Activated naive CD4-positive, alpha-beta T cell treated with anti-CD3 and anti-CD28 coated beads for 36 hours (primary cell): ENCODE measurements at regions of chr10 and their contacts with region 1.

Region 1: GRCh38 chr10:97025613-97026242 is 160.0 kb downstream of the SLIT1 start:
- DNase-seq: peak; percentile 80
- H3K4me3 Mint-ChIP-seq: no peak overlapping the region
- H3K27ac Mint-ChIP-seq: no peak overlapping the region
- H3K4me1 Mint-ChIP-seq: peaks cover 2% of the 10 kb centered on the region
- H3K27me3 Mint-ChIP-seq: no peaks in the 10 kb centered on the region

Region 2: DNA sequence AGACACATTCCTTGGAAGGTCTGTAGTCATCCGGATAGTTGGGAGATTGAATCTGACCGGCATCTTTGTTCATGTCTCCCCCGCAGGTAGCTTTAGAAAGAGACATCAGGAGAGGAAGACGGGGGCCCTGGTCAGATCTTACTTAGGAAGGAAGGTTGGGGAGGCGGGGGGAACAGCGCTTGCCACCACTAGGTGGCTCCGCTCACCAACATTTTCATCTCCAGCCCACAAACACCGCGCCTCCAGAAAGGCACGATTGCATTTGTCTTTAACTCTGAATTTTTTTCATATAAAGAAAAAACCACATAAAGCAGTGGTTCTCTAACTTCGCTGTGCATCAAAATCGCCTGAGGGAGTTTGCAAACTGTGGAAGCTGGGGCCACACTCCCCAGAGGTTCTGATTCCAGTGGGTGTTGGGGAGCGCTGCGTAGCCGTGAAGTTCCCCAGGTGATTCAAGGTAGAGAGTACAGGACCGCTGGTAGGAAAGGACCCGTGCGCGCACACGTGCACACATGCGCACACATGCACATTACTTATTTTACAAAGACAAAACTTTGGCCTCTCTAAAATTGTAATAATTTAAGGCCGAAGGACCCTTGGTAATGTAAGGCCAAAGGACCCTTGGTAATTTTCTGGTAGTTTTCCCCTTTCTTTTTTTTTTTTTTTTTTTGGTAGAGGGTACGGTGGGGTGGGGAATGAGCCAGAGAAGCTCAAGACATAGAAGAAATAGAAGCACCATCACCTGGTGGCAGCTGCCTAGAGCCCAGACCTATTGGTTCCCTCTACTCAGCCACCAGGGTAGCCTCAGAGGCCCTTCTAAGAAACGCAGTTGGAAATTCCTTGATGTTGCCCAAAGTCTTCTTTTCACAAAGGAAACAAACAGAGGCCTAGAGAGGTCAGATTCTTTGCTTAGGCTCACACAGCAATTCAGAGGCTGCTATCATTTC is 629.5 kb before region 1 on chr10:
- CTCF ChIA-PET with region 1: interaction called, 3 read pairs
- intact Hi-C with region 1: loop called (anchors 5 kb)
- DNase-seq: peak; percentile 75
- H3K4me3 Mint-ChIP-seq: peak overlapping the region; percentile 28
- H3K27ac Mint-ChIP-seq: no peak overlapping the region
- H3K4me1 Mint-ChIP-seq: no peaks in the 10 kb centered on the region
- H3K27me3 Mint-ChIP-seq: peaks cover 15% of the 10 kb centered on the region

Region 3: DNA sequence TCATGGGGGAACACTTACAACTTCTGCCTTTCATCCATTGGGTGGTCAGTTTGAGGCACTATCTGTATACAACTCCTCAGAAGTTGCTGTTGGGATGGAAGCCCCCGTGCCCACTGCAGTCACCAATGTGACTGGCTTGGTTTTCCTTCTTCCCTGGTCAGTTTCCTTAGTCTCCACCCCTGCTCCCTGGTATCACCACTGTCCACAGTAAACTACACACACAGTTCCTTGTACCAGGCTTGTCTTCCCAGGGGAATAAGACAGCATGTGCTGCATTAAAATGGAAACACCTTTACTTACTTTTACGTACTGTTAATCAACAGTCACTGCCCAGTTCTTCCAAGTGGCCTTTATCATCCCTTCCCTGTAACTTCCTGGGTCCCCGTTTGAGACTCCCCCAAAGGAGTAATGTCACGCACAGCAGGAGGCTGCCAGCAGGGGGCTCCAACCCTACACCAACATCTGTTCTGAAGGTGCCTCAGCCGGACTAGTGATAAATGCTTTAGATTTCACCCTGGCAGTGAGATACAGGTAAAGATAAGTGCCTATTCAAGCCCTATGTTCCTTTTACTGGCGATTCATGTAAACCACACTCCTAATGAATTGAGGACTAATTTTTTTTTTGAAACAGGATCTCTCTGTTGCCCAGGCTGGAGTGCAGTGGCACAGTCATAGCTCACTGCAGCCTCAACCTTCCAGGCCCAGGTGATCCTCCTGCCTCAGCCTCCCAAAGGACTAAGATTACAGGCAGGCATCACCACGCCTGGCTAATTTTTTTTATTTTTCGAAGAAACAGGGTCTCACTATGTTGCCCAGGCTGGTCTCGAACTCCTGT is 260.1 kb before region 1 on chr10:
- CTCF ChIA-PET with region 1: interaction called, 10 read pairs
- intact Hi-C with region 1: loop called (anchors 1 kb)
- DNase-seq: peak; percentile 86
- H3K4me3 Mint-ChIP-seq: no peak overlapping the region
- H3K27ac Mint-ChIP-seq: no peak overlapping the region
- H3K4me1 Mint-ChIP-seq: peaks cover 2% of the 10 kb centered on the region
- H3K27me3 Mint-ChIP-seq: no peaks in the 10 kb centered on the region

Region 4: DNA sequence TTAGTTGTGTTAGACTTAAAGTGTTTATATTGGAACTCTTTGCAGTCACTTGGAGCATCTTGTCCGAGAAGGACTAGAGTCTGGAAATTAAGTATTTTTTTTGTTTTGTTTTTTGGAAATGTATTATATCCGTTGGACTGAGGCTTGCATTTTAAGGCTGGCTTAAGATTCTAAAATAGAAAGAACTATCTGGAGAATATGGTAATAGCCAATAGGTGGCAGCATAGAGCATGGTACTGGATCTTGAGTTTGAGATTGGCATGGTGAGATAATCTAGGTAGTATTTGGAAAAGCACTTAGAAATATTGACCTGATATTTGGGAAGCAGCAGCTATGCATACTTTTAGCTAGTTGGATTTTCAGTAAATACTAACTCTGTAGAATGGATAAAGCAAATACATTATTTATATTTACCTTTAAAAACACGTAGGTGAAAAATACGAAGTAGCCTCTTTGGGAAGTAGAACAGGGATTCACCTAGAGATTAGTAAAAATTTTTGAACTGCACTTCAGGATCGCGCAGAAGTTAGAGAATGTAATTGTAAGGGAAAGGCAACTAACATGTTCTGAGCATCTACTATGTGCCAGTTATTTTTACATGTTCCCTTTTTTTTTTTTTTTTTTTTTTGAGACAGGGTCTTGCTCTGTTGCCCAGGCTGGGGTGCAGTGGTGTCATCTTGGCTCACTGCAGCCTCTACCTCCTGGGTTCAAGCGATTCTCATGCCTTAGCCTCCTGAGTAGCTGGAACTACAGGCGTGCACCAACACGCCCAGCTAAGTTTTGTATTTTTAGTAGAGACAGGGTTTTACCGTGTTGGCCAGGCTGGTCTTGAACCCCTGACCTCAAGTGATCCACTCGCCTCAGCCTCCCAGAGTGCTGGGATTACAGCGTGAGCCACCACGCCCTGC is 115.0 kb before region 1 on chr10:
- CTCF ChIA-PET with region 1: interaction called, 35 read pairs
- intact Hi-C with region 1: loop called (anchors 1 kb)
- DNase-seq: peak; percentile 29
- H3K4me3 Mint-ChIP-seq: no peak overlapping the region
- H3K27ac Mint-ChIP-seq: no peak overlapping the region
- H3K4me1 Mint-ChIP-seq: peaks cover 20% of the 10 kb centered on the region
- H3K27me3 Mint-ChIP-seq: no peaks in the 10 kb centered on the region

Region 5: GRCh38 chr10:96922978-96923948 is 102.5 kb before region 1 on chr10:
- CTCF ChIA-PET with region 1: interaction called, 12 read pairs
- intact Hi-C with region 1: no loop called
- DNase-seq: no peak
- H3K4me3 Mint-ChIP-seq: no peak overlapping the region
- H3K27ac Mint-ChIP-seq: no peak overlapping the region
- H3K4me1 Mint-ChIP-seq: peaks cover 11% of the 10 kb centered on the region
- H3K27me3 Mint-ChIP-seq: no peaks in the 10 kb centered on the region

Region 6: GRCh38 chr10:97013568-97013967 is 12.2 kb before region 1 on chr10:
- CTCF ChIA-PET with region 1: interaction called, 18 read pairs
- intact Hi-C with region 1: no loop called
- DNase-seq: no peak
- H3K4me3 Mint-ChIP-seq: no peak overlapping the region
- H3K27ac Mint-ChIP-seq: no peak overlapping the region
- H3K4me1 Mint-ChIP-seq: peaks cover 8% of the 10 kb centered on the region
- H3K27me3 Mint-ChIP-seq: no peaks in the 10 kb centered on the region

Region 7: GRCh38 chr10:97037365-97038361 is 11.9 kb after region 1 on chr10:
- CTCF ChIA-PET with region 1: interaction called, 62 read pairs
- intact Hi-C with region 1: no loop called
- DNase-seq: peak; percentile 86
- H3K4me3 Mint-ChIP-seq: peak overlapping the region; percentile 48
- H3K27ac Mint-ChIP-seq: no peak overlapping the region
- H3K4me1 Mint-ChIP-seq: peaks cover 10% of the 10 kb centered on the region
- H3K27me3 Mint-ChIP-seq: no peaks in the 10 kb centered on the region